ENCODE measurements at regions of chr6 and their contacts with region 1.

Region 1: GRCh38 chr6:144582939-144583613 is 297.9 kb downstream of the UTRN start:
- DNase-seq: peak; percentile 32 to 44
- ATAC-seq: peak; percentile 45 to 84 (median 74)
- H3K4me3 ChIP-seq: peak overlapping the region in 4 of 10 donors; percentile 2 to 24 (median 16)
- H3K27ac ChIP-seq: peak overlapping the region in 1 of 10 donors; percentile 42
- H3K4me1 ChIP-seq: peaks cover 2 to 57% (median 25%) of the 10 kb centered on the region in 9 donors
- H3K27me3 ChIP-seq: no peaks in the 10 kb centered on the region
- CTCF ChIP-seq: no peak

Region 2: DNA sequence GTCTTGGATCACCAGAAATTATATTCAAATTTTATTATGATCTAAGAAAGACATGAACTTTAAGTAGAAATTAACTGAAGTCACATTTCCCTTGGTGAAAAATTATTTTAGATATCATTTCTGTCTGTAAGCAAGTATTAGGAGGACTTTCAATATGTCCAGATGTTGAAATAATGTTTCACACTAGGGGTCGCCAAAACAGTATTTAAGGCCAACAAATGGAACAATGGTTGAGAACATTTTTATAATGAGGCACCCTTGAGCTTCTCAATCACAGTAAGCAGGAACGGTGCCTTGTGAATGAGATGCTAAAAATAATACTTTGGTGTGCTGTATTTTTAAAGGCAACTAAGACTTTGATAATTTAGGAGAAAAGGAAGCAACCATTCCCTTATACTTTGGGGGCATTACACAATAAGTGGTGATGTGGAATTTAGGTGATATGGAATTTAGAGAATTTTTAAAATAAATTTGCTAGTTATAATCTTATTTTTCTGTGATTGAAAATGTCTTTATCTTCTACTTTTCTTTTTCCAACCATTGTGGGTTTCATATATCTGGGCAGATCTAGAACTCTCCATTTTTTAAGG is 478.1 kb before region 1 on chr6:
- intact Hi-C with region 1: loop called in 1 of 10 experiments (anchors 10 kb)
- DNase-seq: peak in 1 of 2 donors; percentile 74
- ATAC-seq: peak; percentile 57 to 91 (median 87)
- H3K4me3 ChIP-seq: no peak overlapping the region
- H3K27ac ChIP-seq: no peak overlapping the region
- H3K4me1 ChIP-seq: peaks cover 0 to 6% (median 0%) of the 10 kb centered on the region in 9 donors
- H3K27me3 ChIP-seq: no peaks in the 10 kb centered on the region
- CTCF ChIP-seq: peak; percentile 48 to 87 (median 72)

Region 3: DNA sequence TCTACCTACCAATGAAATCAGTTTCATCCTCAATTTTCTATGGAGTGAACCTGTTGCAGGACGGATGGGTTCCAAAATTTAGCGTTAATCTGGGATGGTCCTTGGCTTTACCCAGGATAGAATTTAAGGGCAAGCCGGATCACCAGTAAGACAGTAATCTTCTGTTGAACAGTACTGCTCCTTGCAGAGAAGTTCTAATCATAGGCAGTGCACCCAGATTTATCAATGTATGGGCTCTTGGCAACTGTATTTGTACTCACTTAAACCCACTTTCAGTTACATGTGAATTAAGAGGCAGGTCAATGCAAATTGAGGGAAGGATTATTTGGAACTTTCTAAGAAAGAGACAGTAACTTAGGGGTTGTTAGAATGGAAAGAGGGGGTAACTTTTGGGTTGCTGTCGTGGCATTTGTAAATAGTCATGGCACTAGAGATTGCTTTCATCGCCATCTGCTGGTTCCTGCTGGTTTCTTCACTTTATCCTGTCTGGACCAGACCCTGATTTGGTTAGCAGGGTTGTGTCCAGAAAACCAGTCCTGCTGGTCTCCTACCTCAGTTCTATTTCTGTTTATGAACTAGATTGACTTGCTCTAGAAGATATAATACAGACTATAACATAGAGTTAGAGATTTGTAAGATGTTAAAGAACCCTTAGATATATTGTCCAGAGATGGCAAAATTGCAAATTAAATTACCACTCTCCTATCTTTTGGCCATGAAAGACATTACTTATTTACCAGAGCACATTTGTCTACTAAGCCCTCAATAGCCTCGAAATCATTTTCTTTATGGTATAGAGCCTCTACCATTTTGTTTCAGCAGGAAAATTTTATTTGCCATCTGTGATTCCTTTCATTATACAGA is 348.3 kb after region 1 on chr6:
- intact Hi-C with region 1: loop called in 6 of 10 experiments (anchors 5 to 10 kb)
- DNase-seq: peak in 1 of 2 donors; percentile 8
- ATAC-seq: no peak
- H3K4me3 ChIP-seq: no peak overlapping the region
- H3K27ac ChIP-seq: no peak overlapping the region
- H3K4me1 ChIP-seq: no peaks in the 10 kb centered on the region
- H3K27me3 ChIP-seq: no peaks in the 10 kb centered on the region
- CTCF ChIP-seq: peak in 8 of 9 donors; percentile 28 to 70 (median 55)

Region 4: DNA sequence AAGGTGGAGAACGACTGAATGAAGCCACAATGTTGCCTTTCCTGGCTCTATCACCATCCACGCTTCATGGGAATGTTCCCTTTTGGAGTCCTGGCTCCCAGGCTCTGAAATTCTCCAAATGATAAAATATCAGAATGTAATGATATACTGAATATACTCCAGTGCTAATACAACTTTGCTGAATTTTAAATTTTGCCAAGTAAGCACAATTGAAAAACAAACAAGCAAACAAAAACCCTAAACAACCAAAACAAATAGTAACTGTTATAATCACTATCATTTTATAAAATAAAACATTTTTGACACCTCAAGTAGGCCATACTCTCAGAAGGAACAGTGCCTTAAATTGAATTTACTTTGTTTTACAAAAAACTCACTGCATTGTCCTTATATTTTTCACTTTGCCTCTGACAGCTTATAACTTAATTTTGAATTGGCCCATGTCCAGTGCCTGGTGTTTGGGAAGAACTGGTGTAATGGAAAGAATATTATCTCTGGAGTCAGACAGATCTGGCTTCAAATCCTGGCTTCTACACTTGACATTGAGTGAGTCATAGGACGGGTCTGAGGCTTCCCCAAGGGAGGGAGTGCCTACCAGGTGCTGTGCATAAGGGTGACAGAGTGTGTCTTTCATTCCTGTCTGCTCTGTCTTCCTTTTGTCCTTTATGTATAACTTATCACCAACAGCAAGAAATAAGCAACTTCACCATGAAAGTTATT is 453.9 kb after region 1 on chr6:
- intact Hi-C with region 1: loop called in 1 of 10 experiments (anchors 10 kb)
- DNase-seq: no peak
- ATAC-seq: peak; percentile 25 to 99 (median 81)
- H3K4me3 ChIP-seq: no peak overlapping the region
- H3K27ac ChIP-seq: peak overlapping the region in 1 of 10 donors; percentile 9
- H3K4me1 ChIP-seq: peaks cover 0 to 6% (median 0%) of the 10 kb centered on the region in 9 donors
- H3K27me3 ChIP-seq: no peaks in the 10 kb centered on the region
- CTCF ChIP-seq: no peak

Region 5: GRCh38 chr6:145214570-145214969 is 631.5 kb after region 1 on chr6:
- intact Hi-C with region 1: loop called (anchors 2 to 10 kb)
- DNase-seq: no peak
- ATAC-seq: no peak
- H3K4me3 ChIP-seq: no peak overlapping the region
- H3K27ac ChIP-seq: no peak overlapping the region
- H3K4me1 ChIP-seq: peaks cover 0 to 5% (median 0%) of the 10 kb centered on the region in 9 donors
- H3K27me3 ChIP-seq: no peaks in the 10 kb centered on the region
- CTCF ChIP-seq: peak; percentile 28 to 75 (median 62)

Region 6: GRCh38 chr6:145633981-145634627 is 1051.0 kb after region 1 on chr6:
- intact Hi-C with region 1: loop called in 8 of 10 experiments (anchors 5 to 10 kb)
- DNase-seq: peak; percentile 83 to 85
- ATAC-seq: peak; percentile 73 to 93 (median 91)
- H3K4me3 ChIP-seq: no peak overlapping the region
- H3K27ac ChIP-seq: no peak overlapping the region
- H3K4me1 ChIP-seq: peaks cover 0 to 20% (median 7%) of the 10 kb centered on the region in 9 donors
- H3K27me3 ChIP-seq: no peaks in the 10 kb centered on the region
- CTCF ChIP-seq: peak; percentile 75 to 93 (median 88)